ENCODE measurements at regions of chr15 and their contacts with region 1.

Region 1: DNA sequence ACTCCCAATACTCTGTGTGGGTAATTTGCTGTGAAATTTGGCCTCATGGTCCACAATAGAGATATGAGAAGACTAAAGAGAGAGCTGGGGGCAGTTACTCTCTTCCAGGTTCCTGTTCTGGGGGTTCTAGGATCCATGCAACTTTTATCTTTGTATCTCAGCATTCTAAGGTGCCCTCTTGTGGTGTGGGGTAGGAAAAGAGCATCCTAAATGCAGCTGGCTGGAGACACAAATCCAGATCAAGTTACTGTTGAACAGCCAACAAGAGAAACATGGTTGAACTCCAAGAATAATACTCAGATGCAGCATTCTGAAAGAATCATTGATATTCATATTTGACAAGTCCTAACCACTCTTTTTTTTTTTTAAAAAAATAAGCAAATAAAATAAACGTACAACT is 238.2 kb downstream of the GREM1 start:
- DNase-seq: no peak
- ATAC-seq: peak; percentile 60

Region 2: GRCh38 chr15:32659340-32660155 is 296.5 kb before region 1 on chr15:
- intact Hi-C with region 1: loop called (anchors 10 kb)
- DNase-seq: no peak
- ATAC-seq: peak; percentile 54

Region 3: DNA sequence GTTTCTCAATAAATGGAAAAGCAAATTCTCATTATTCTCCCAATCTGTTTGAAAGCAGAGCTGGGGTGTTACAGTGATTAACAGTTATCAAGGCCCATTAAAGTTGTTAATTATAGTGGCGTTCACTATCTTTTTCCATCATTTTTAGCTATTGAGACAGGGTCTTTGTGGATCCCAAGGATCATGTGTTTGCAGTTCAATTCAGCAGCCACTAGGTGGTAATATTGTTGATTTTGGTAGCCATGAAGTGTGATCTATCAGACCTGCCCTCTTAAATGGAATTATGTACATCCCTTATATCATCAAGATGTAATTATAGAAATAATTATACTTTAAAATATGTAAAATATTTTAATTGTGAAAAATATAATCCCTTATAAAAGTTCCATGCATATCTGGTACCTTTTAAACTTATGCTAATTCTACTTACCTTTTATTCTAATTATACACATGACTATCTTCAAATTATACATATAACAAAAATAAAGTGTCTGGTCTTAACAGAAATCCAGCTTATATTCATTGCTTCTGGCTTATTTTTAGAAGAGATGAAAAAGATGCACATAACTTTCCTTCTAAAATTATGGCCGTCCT is 111.8 kb before region 1 on chr15:
- intact Hi-C with region 1: loop called (anchors 10 kb)
- DNase-seq: no peak
- ATAC-seq: no peak

Measured in Right ventricle myocardium inferior (tissue), 1 donor.